ENCODE measurements at regions of chr17 and their contacts with region 1.

Region 1: GRCh38 chr17:15502369-15503112 is 35.1 kb upstream of the CDRT4 start:
- DNase-seq: peak; percentile 90
- H3K4me3 ChIP-seq: peak overlapping the region; percentile 60
- H3K27ac ChIP-seq: peak overlapping the region; percentile 90
- H3K4me1 ChIP-seq: peaks cover 13% of the 10 kb centered on the region
- H3K27me3 ChIP-seq: no peaks in the 10 kb centered on the region
- CTCF ChIP-seq: peak; percentile 92

Region 2: GRCh38 chr17:15262291-15263205 is 240.0 kb before region 1 on chr17:
- intact Hi-C with region 1: loop called (anchors 2 kb)
- DNase-seq: peak; percentile 92
- H3K4me3 ChIP-seq: peak overlapping the region; percentile 90
- H3K27ac ChIP-seq: peak overlapping the region; percentile 99
- H3K4me1 ChIP-seq: peaks cover 78% of the 10 kb centered on the region
- H3K27me3 ChIP-seq: no peaks in the 10 kb centered on the region
- CTCF ChIP-seq: peak; percentile 41

Region 3: GRCh38 chr17:15462976-15463772 is 39.4 kb before region 1 on chr17:
- intact Hi-C with region 1: no loop called
- DNase-seq: peak; percentile 33
- H3K4me3 ChIP-seq: no peak overlapping the region
- H3K27ac ChIP-seq: peak overlapping the region; percentile 78
- H3K4me1 ChIP-seq: peaks cover 39% of the 10 kb centered on the region
- H3K27me3 ChIP-seq: no peaks in the 10 kb centered on the region
- CTCF ChIP-seq: no peak